ENCODE measurements at regions of chr15 and their contacts with region 1.

Region 1: DNA sequence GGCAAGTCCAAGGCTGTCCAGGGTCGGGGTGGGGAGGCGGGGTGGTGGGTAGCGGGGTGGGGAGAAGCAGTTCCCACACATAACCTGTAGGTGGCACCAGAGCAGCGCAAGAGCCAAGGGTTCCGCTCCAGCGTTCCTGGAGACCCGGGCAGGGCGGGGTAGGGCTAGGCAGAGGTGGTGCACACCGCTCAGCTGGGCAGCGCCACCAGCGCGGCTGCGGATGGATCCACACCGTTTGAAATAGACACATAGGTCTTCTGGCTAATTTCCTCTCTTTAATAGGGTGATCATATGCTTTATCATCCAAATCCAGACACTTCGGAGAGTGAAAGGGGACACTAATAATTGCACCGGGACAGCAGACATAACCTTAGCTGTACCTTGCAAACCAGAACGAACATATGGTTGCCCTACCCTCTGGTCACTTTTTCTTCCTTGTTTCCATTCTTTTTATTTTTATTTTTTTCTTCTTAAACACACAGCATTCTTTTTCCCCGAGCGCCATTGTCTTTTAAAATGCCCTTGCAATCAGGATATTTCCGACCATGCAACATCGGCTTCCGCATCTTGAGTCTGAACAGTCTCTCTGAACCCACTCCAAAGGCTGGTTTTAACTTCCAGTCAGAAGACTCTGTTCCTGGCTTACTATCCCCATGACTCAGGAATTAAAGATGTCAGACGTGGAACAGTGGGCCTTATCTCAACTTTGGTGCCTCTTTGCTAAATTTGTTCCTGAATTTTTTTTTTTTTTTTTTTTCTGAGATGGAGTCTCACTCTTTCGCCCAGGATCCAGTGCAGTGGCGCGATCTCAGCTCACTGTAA is 12.5 kb upstream of the ZSCAN2 start:
- DNase-seq: peak; percentile 71 to 92
- ATAC-seq: peak; percentile 100
- H3K4me3 ChIP-seq: no peak overlapping the region
- H3K4me3 Mint-ChIP-seq: peak overlapping the region; percentile 74
- H3K27ac ChIP-seq: no peak overlapping the region
- H3K27ac Mint-ChIP-seq: no peak overlapping the region
- H3K4me1 ChIP-seq: peaks cover 6% of the 10 kb centered on the region
- H3K4me1 Mint-ChIP-seq: peaks cover 0 to 12% of the 10 kb centered on the region in 2 donors
- H3K27me3 ChIP-seq: no peaks in the 10 kb centered on the region
- H3K27me3 Mint-ChIP-seq: peaks cover 0 to 11% of the 10 kb centered on the region in 2 donors
- CTCF ChIP-seq: peak; percentile 87

Region 2: DNA sequence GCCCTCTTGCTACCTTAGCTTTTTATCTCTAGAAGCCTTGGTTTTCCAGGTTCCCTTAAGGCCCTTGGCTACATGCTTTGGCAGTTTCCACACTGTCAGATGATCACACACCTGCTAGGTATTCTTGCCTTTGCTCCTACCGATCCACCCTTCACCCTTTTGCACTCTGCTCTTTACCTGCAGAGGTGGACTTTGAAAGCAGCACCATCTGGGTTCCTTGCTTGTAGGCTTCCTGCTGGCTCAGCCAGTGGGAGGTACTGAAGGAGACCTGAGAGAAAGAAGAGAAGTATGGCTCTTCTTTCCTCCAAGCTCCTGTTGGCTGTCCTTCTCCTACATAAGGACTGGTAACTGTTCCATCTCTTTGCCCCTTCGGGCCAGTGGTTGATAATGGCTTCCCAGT is 152.9 kb after region 1 on chr15:
- intact Hi-C with region 1: no loop called
- DNase-seq: no peak
- ATAC-seq: no peak
- H3K4me3 ChIP-seq: no peak overlapping the region
- H3K4me3 Mint-ChIP-seq: no peak overlapping the region
- H3K27ac ChIP-seq: no peak overlapping the region
- H3K27ac Mint-ChIP-seq: peak overlapping the region in 1 of 2 donors; percentile 23
- H3K4me1 ChIP-seq: peaks cover 7% of the 10 kb centered on the region
- H3K4me1 Mint-ChIP-seq: peaks cover 28 to 36% of the 10 kb centered on the region in 2 donors
- H3K27me3 ChIP-seq: no peaks in the 10 kb centered on the region
- H3K27me3 Mint-ChIP-seq: no peaks in the 10 kb centered on the region
- CTCF ChIP-seq: no peak

Region 3: GRCh38 chr15:84883433-84883832 is 295.2 kb after region 1 on chr15:
- intact Hi-C with region 1: loop called (anchors 1 kb)
- DNase-seq: no peak
- ATAC-seq: no peak
- H3K4me3 ChIP-seq: no peak overlapping the region
- H3K4me3 Mint-ChIP-seq: no peak overlapping the region
- H3K27ac ChIP-seq: no peak overlapping the region
- H3K27ac Mint-ChIP-seq: no peak overlapping the region
- H3K4me1 ChIP-seq: no peaks in the 10 kb centered on the region
- H3K4me1 Mint-ChIP-seq: no peaks in the 10 kb centered on the region
- H3K27me3 ChIP-seq: no peaks in the 10 kb centered on the region
- H3K27me3 Mint-ChIP-seq: peaks cover 0 to 2% of the 10 kb centered on the region in 2 donors
- CTCF ChIP-seq: no peak

Measured in natural killer cell (primary cell).